A673 (cell line): ENCODE measurements at regions of chr2 and their contacts with region 1.

Region 1: DNA sequence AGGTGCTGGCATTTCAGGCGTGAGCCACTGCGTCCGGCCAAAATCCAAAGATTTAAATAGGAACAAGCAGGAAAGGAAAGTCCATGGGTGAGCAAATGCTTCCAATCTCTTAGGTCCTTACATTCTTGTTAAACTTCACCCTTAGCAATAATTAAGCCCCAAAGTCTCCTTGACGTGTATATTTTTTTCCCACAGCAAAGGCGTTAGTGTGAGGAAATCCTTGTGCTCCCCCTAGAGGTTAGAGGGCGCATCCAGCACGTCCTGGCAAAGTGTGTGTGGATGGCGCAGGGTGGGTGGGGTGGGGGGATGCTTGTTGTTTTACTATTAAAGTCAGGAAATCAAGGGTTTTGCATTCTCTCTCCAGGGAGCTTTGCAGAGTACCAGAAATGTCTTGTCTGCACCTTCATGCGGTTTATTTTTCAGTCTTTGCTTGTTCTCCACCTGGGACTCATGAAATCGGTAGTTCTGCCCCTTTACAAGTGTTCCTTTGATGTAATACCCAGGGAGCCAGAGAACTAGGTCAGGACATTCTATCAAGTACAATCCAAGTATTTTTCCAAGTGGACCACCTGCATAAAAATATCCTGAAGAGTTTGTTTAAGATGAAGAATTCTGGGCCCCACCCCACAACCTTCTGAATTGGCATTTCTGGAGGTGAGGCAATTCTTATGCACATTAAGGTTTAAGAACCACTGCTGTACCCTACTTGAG is 22.2 kb upstream of the ITSN2 start:
- DNase-seq: peak; percentile 87
- H3K4me3 ChIP-seq: no peak overlapping the region
- H3K27ac ChIP-seq: no peak overlapping the region
- H3K4me1 ChIP-seq: no peaks in the 10 kb centered on the region
- H3K27me3 ChIP-seq: no peaks in the 10 kb centered on the region
- CTCF ChIP-seq: peak; percentile 64

Region 2: GRCh38 chr2:23988371-23988770 is 394.1 kb before region 1 on chr2:
- CTCF ChIA-PET with region 1: no interaction called
- POLR2A ChIA-PET with region 1: no interaction called
- intact Hi-C with region 1: loop called (anchors 5 kb)
- DNase-seq: peak; percentile 32
- H3K4me3 ChIP-seq: no peak overlapping the region
- H3K27ac ChIP-seq: no peak overlapping the region
- H3K4me1 ChIP-seq: peaks cover 5% of the 10 kb centered on the region
- H3K27me3 ChIP-seq: no peaks in the 10 kb centered on the region
- CTCF ChIP-seq: peak; percentile 30; the same call in 1 of the 2 replicates

Region 3: DNA sequence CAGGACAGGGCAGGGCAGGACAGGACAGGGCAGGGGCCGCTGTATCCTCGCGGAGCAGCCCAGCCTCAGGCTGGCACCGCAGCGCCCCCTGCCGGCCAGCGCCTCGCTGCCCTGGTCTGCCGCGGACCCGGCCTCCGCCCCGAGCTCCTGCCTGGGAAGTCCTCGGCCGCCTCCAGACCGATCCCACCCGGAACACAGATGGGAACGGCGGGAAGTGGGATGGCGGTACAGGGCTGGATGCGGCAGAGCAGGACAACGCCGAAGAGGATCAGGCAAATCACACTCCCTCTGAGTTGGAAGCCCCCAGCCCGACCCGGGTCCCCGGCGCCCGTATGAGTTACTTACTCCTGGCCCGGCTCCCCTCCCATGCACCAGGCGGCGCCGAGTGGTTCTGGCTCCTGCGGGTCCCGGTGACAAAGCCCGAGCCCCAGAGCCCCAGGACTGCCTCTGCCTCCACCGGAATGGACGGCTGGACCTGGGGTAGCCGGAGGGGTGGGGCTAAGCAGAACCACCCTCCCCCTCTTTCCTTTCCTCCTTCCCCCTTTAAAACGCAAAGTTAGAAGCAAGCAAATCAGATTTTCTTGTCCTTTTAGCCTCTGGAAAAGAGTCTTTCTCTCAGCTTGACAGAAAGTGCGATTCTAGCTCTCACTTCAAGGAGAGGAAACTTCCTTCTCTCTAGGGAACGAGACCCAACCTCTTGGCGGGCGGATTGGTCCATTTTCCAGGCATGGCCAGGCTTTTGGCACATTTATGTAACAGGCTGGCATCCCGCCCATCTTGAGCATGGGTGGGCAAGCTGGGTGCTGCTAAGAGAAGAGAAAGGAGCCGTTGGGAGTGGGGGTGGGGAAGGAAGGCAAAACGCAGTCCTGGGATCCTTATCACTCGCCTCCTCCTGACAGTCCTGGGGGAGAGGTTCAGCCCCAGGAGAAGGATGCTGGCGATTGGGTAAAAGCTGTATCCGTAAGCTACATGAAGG is 297.8 kb before region 1 on chr2 and contains the start of gene TP53I3:
- CTCF ChIA-PET with region 1: no interaction called
- POLR2A ChIA-PET with region 1: no interaction called
- intact Hi-C with region 1: loop called (anchors 5 kb)
- DNase-seq: peak; percentile 83
- H3K4me3 ChIP-seq: peak within 1 kb of the TSS; percentile 63
- H3K27ac ChIP-seq: peak within 1 kb of the TSS; percentile 53
- H3K4me1 ChIP-seq: peaks cover 4% of the 10 kb centered on the region
- H3K27me3 ChIP-seq: no peaks in the 10 kb centered on the region
- CTCF ChIP-seq: peak; percentile 88
- total RNA-seq, gene TP53I3: 2.8 and 3.0 TPM in 2 replicates

Region 4: DNA sequence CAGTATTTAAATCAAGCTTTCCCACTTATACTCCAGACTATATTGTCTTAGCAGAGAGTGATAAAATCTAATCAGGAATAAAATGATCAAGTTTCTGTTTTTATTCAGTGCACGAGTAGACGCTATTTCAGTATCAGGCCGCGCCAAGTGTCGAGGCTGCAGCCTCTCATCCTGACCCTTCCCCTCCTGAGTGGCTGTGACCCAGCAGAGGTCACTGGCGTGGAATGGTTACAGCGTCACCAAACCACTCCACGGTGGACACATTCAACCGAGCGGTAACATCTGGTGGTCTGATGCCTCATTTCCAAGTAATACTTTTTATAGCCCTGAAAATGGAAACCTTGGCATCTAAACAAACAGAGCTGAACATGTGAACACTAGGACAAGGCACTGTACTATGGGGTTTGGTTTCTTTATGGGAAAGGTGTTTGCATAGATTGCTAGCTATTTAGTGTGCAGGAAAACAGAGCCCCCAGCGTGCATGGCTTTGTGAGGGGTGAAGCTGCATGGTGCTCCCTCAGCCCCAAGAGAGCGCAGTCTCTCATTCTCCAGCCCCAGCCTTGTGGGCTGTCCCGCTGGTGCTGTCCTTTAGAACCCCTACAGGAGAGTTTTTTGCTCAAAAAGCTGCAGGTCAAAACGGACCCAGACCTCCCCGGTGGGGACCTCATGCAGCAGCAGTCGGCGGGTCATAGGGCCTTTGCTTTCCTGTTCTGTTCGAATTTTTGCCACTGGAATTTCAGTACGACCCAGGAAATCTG is 179.3 kb before region 1 on chr2:
- CTCF ChIA-PET with region 1: no interaction called
- POLR2A ChIA-PET with region 1: interaction called, 11 read pairs
- intact Hi-C with region 1: no loop called
- DNase-seq: no peak
- H3K4me3 ChIP-seq: no peak overlapping the region
- H3K27ac ChIP-seq: no peak overlapping the region
- H3K4me1 ChIP-seq: no peaks in the 10 kb centered on the region
- H3K27me3 ChIP-seq: no peaks in the 10 kb centered on the region
- CTCF ChIP-seq: no peak

Region 5: DNA sequence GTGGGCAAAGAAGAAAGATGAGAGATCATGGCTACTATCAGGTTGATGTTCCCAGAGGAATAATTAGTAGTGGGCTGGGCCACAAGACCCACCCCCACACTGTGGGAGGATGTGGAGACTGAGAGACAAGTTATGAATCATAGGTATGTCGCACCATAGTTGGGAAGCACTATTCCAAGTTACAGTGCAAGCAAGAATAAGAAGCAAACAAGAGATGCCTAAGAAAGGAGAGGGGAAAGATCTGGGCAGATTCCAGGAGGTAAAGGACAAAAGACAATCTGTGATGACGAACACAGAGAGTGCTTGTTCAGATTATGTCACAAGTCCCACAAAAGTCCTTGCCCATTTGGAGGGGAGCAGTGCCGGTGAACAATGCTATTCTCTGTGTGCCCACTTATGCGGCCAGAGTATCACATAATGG is 151.0 kb before region 1 on chr2:
- CTCF ChIA-PET with region 1: no interaction called
- POLR2A ChIA-PET with region 1: no interaction called
- intact Hi-C with region 1: loop called (anchors 5 kb)
- DNase-seq: no peak
- H3K4me3 ChIP-seq: no peak overlapping the region
- H3K27ac ChIP-seq: no peak overlapping the region
- H3K4me1 ChIP-seq: no peaks in the 10 kb centered on the region
- H3K27me3 ChIP-seq: no peaks in the 10 kb centered on the region
- CTCF ChIP-seq: no peak

Region 6: DNA sequence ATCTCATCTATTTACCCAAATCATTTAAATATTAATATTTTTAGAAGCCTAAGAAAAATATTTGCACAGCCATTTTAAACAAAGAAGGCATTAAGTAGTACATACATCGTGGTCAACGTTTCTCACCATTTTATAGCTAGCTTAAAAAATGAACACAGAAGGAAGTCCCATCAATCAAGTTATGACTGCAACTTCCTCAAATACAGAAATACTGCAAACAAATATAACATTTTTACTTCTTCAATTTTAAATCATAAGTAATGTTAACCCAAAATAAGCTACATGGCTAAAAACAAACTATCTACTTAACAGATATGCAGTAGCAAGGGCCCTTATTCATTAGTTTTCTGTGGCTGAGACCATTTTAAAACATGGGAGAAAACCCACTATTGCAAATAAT is 52.8 kb before region 1 on chr2:
- CTCF ChIA-PET with region 1: no interaction called
- POLR2A ChIA-PET with region 1: no interaction called
- intact Hi-C with region 1: no loop called
- DNase-seq: no peak
- H3K4me3 ChIP-seq: no peak overlapping the region
- H3K27ac ChIP-seq: no peak overlapping the region
- H3K4me1 ChIP-seq: no peaks in the 10 kb centered on the region
- H3K27me3 ChIP-seq: no peaks in the 10 kb centered on the region
- CTCF ChIP-seq: no peak